SK-N-SH (cell line): ENCODE measurements at regions of chrX and their contacts with region 1.

Region 1: DNA sequence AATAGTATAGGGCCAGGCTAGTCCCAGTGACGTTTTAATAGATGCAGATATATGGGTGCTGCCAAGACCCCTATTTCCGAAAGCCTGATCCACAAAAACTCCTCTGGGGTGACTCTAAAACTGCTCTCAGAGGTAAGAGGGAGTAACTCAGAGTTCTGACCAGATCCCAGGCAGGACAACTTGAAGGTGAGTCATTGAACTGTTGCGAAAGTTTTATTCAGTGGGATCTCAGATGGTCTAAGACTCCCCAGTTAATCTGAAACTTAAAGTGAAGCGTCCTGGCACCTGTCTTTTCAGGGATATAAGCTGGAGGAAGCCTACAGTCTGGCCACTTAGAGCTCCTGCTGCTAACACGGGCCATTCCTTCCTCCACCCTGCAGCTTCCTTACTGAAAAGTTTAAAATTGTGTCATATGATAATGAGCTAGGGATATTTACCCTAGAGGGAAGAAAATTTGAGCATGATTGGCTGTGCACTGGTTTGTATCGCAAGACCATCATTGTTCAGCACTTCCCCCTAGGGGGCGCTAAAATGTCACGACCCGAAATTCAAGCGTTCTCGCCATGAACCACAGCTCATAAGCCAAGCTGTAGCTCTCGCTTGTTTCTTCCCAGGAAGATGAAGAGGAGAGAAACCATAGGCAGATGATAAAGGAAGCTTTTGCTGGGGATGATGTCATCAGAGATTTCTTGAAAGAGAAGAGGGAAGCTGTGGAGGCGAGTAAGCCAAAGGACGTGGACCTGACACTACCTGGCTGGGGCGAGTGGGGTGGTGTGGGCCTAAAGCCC is 19.5 kb downstream of the UTP14A start:
- DNase-seq: peak; percentile 69
- H3K4me3 ChIP-seq: no peak overlapping the region
- H3K27ac ChIP-seq: no peak overlapping the region
- H3K4me1 ChIP-seq: no peaks in the 10 kb centered on the region; a peak in 1 of 4 replicates
- H3K27me3 ChIP-seq: no peaks in the 10 kb centered on the region
- CTCF ChIP-seq: peak; percentile 87
- EP300 ChIP-seq: no peak
- RAD21 ChIP-seq: peak; percentile 81

Region 2: GRCh38 chrX:128931071-128931470 is 994.4 kb before region 1 on chrX:
- CTCF ChIA-PET with region 1: no interaction called
- POLR2A ChIA-PET with region 1: no interaction called
- DNase-seq: no peak
- H3K4me3 ChIP-seq: no peak overlapping the region
- H3K27ac ChIP-seq: no peak overlapping the region
- H3K4me1 ChIP-seq: no peaks in the 10 kb centered on the region
- H3K27me3 ChIP-seq: no peaks in the 10 kb centered on the region
- CTCF ChIP-seq: no peak
- EP300 ChIP-seq: no peak
- RAD21 ChIP-seq: no peak

Region 3: DNA sequence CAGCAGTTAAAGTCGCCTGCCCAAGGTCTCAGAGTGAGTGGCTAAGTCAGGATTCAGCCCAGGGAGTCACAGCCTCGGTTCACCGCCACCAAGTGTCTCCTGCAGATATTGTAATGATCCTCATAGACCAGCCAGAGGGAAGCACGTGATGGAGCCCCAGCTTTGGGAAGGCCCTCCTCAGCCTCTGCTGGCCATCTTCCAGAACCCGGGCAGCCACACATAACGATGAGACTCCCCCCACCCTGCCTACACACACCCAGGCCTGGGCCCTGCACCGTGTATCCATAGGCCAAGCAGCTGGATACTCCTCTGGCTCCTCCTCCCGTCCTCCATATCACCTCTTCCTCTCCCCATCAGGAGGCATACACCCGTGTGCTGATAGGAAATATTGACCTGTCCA is 165.3 kb before region 1 on chrX:
- CTCF ChIA-PET with region 1: no interaction called
- POLR2A ChIA-PET with region 1: no interaction called
- DNase-seq: no peak
- H3K4me3 ChIP-seq: no peak overlapping the region
- H3K27ac ChIP-seq: no peak overlapping the region
- H3K4me1 ChIP-seq: peaks cover 0 to 8% of the 10 kb centered on the region in 2 experiments; a peak in 1 of 4 replicates
- H3K27me3 ChIP-seq: peaks cover 7% of the 10 kb centered on the region; the same call in 1 of the 2 replicates
- CTCF ChIP-seq: no peak
- EP300 ChIP-seq: no peak
- RAD21 ChIP-seq: no peak

Region 4: GRCh38 chrX:129905787-129906580 is 19.5 kb before region 1 on chrX and contains the start of gene UTP14A:
- CTCF ChIA-PET with region 1: interaction called, 15 read pairs
- POLR2A ChIA-PET with region 1: interaction called, 11 read pairs
- DNase-seq: peak; percentile 84
- H3K4me3 ChIP-seq: peak within 1 kb of the TSS; percentile 77 to 94
- H3K27ac ChIP-seq: peak within 1 kb of the TSS; percentile 70
- H3K4me1 ChIP-seq: no peaks in the 10 kb centered on the region; a peak in 1 of 4 replicates
- H3K27me3 ChIP-seq: no peaks in the 10 kb centered on the region
- CTCF ChIP-seq: no peak
- EP300 ChIP-seq: peak in 1 of 2 experiments; percentile 12; a peak in 1 of 4 replicates
- RAD21 ChIP-seq: no peak
- polyA plus RNA-seq, gene UTP14A: 25.4 and 31.7 TPM in 2 replicates

Region 5: DNA sequence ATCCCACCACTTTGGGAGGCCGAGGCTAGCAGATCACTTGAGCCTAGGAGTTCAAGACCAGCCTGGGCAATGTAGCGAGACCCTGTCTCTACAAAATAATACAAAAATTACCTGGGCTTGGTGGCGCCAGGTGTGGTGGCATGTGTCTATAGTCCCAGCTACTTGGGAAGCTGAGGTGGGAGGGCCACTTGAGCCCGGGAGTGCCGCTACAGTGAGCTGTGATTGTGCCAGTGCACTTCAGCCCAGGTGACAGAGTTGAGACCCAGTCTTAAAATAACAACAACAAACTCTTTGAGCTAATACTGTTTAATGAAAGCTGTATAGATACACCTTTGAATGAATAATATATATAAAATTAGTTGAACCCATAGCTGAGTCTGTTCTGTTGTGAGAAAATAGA is 66.7 kb after region 1 on chrX:
- CTCF ChIA-PET with region 1: interaction called, 11 read pairs
- POLR2A ChIA-PET with region 1: interaction called, 4 read pairs
- DNase-seq: no peak
- H3K4me3 ChIP-seq: no peak overlapping the region
- H3K27ac ChIP-seq: no peak overlapping the region
- H3K4me1 ChIP-seq: no peaks in the 10 kb centered on the region
- H3K27me3 ChIP-seq: no peaks in the 10 kb centered on the region; the same call in 1 of the 2 replicates
- CTCF ChIP-seq: no peak
- EP300 ChIP-seq: no peak
- RAD21 ChIP-seq: no peak

Region 6: GRCh38 chrX:130028196-130028595 is 102.7 kb after region 1 on chrX:
- CTCF ChIA-PET with region 1: interaction called, 20 read pairs
- POLR2A ChIA-PET with region 1: no interaction called
- DNase-seq: peak; percentile 49
- H3K4me3 ChIP-seq: no peak overlapping the region
- H3K27ac ChIP-seq: no peak overlapping the region
- H3K4me1 ChIP-seq: no peaks in the 10 kb centered on the region
- H3K27me3 ChIP-seq: peaks cover 30% of the 10 kb centered on the region; the same call in 1 of the 2 replicates
- CTCF ChIP-seq: peak; percentile 77
- EP300 ChIP-seq: no peak
- RAD21 ChIP-seq: peak; percentile 37; the same call in 1 of the 2 replicates

Region 7: GRCh38 chrX:130053236-130053635 is 127.7 kb after region 1 on chrX:
- CTCF ChIA-PET with region 1: interaction called, 10 read pairs
- POLR2A ChIA-PET with region 1: no interaction called
- DNase-seq: no peak
- H3K4me3 ChIP-seq: no peak overlapping the region
- H3K27ac ChIP-seq: no peak overlapping the region
- H3K4me1 ChIP-seq: no peaks in the 10 kb centered on the region
- H3K27me3 ChIP-seq: peaks cover 6% of the 10 kb centered on the region; the same call in 1 of the 2 replicates
- CTCF ChIP-seq: no peak
- EP300 ChIP-seq: no peak
- RAD21 ChIP-seq: no peak

Region 8: GRCh38 chrX:130060122-130061069 is 134.9 kb after region 1 on chrX:
- CTCF ChIA-PET with region 1: interaction called, 22 read pairs
- POLR2A ChIA-PET with region 1: interaction called, 3 read pairs
- DNase-seq: peak; percentile 98
- H3K4me3 ChIP-seq: peak overlapping the region; percentile 46 to 60
- H3K27ac ChIP-seq: no peak overlapping the region
- H3K4me1 ChIP-seq: peaks cover 0 to 4% of the 10 kb centered on the region in 2 experiments; a peak in 1 of 4 replicates
- H3K27me3 ChIP-seq: no peaks in the 10 kb centered on the region; the same call in 1 of the 2 replicates
- CTCF ChIP-seq: peak; percentile 88
- EP300 ChIP-seq: no peak
- RAD21 ChIP-seq: peak; percentile 79

Region 9: DNA sequence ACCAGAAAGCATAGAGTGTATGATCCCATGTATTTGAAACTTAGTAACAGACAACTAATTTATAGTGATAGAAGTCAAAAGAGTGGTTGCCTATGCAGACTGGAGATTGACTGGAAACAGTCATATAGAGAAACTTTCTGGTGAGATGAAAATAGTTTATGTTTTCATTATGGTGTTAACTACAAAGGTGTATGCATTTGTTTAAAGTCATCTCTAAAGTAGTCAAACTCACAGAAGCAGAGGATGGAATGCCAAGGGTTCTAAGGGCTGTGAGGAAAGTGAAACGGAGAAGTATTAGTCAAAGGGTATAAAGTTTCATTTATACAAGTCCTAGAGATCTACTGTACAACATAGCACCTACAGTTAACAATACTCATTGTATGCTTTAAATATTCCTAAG is 931.7 kb after region 1 on chrX:
- CTCF ChIA-PET with region 1: no interaction called
- POLR2A ChIA-PET with region 1: no interaction called
- DNase-seq: no peak
- H3K4me3 ChIP-seq: no peak overlapping the region
- H3K27ac ChIP-seq: no peak overlapping the region
- H3K4me1 ChIP-seq: no peaks in the 10 kb centered on the region
- H3K27me3 ChIP-seq: no peaks in the 10 kb centered on the region
- CTCF ChIP-seq: no peak
- EP300 ChIP-seq: no peak
- RAD21 ChIP-seq: no peak